GM13977 (cell line): ENCODE measurements at regions of chr7 and their contacts with region 1.

Region 1: DNA sequence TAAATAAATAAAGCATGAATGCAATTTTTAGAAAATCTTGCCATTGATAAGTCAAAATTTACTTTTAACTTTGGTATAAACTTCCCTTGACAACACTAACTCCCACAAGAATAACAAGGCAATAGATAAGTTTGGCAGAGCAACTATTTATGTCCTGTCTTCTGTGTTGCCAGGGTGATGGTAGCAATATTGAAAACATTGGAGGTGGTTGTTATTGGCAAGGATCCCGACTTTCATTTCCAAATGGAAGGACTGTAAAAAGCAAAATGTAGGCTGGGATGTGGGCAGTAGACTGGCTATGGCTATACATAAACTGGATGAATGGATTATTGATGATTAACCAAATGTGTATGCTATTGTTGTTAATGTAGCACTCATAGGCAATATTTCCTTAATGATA is 134.9 kb upstream of the CACNA2D1 start:
- DNase-seq: no peak
- CTCF ChIP-seq: no peak

Region 2: GRCh38 chr7:81802251-81802650 is 776.2 kb before region 1 on chr7:
- in situ Hi-C with region 1: no loop called
- DNase-seq: no peak
- CTCF ChIP-seq: no peak

Region 3: GRCh38 chr7:81944058-81944457 is 634.4 kb before region 1 on chr7:
- in situ Hi-C with region 1: no loop called
- DNase-seq: no peak
- CTCF ChIP-seq: no peak

Region 4: GRCh38 chr7:82202107-82202506 is 376.3 kb before region 1 on chr7:
- in situ Hi-C with region 1: no loop called
- DNase-seq: no peak
- CTCF ChIP-seq: no peak

Region 5: DNA sequence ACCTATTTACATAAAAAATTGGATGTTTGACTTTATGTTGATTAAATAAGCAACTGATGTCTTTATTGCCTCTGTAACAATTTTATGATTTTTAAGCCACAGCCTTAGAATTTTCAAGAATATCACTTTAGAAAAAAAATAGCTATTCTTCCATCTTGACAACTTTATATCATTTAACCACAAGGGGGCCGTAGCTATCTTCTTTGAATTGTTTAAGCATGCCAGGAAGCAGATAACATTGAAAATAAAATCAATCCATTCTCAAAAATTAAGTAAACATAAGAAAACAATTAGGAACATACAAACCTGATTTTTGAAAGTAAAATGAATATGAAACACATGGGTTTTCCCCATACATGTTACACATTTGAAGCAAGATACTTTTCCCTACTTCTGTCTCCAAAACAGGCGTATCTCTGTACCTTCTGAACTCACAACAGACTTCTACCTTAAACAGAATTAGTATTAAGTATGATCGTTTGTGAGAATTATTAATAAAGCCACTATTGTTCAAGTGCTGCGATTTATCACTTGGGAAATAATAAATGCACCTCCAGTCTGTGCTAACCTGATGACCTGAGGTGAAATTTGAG is 343.9 kb before region 1 on chr7:
- in situ Hi-C with region 1: loop called (anchors 25 kb)
- DNase-seq: peak; percentile 12
- CTCF ChIP-seq: peak; percentile 63

Region 6: DNA sequence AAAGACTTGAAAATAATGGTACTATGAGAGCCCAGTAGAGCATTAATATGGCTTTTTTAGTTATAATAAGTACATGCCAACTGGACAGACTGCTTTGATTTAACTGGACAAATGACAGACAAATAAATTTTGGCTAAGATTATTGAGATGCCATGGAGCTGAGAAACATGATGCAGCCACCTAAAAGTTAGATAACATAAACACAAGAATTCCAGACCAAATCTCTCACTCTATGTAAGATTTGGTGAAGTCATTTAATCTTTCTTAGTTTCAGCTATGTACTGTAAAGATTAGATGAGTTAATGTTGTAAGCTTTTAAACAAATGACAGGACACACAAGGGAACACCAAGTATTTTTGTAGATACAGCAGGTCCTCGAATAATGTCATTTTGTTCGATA is 253.0 kb before region 1 on chr7:
- in situ Hi-C with region 1: no loop called
- DNase-seq: no peak
- CTCF ChIP-seq: no peak